HEK293T (cell line): ENCODE measurements at regions of chr18 and their contacts with region 1.

Region 1: DNA sequence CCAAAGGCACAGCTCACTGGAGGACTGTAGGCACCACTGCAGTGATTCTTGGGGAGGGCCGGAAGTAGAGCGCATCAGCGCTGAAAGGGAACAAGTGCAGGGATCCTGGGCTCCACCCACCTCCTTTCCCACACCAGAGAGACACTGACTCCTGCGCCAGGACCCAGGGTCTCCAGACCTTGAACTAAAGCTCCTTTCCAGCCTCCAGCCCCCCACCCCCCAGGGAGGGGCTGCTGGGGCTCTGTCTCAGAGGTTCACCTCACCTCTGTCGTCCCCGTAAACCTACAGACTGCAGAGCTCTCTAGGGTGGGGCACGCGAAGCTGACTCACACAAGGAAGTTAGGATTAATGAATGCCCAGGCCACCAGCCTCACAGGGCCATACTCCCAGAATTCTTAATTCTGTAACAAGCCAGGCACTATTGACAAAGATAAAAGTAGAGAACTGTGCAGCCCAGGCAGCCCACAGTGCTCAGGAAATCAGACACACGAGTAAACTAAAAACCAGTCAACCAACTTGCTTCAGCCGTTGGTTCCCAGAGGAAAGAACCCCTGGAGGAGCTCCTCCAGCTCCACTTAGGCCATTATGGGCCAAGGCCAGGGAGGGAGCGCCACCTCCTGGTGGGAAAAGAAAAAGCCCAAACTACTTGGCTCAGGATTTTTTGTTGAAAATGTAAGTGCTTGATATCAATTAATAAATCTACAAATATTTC is 45.1 kb upstream of the ACAA2 start:
- DNase-seq: peak; percentile 68

Region 2: DNA sequence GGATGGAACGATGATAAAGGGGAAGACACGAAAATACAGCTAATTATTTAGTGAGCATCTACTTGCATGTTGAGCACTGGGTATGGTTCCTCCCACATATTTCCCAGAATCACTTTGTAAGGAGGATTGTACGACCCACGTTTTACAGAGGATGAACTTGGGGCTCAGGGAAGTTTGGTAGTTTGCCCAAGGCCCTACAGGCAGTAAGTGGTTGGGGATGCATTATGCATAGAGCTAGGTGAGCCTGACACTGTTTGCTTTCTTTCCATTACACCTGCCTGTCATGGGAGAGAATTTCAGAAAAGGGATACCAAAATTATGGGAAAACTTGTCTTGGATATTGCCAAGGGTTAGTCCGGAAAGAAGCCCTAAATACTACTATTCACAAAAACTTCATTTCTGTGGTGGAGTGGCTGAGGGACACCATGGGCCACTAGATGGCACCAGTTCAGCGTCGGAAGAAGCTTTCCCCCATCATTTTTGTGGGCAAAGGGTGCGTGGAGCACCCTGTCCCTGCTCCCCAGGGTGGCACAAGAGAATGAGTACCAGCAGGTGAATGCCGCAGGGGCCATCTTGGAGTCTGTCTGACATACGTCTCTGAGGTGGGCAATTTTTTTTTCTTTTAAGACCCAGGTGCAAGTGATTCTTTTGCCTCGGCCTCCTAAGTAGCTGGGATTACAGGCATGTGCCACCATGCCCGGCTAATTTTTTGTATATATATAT is 347.9 kb before region 1 on chr18:
- CTCF ChIA-PET with region 1: interaction called, 10 read pairs
- POLR2A ChIA-PET with region 1: no interaction called
- DNase-seq: peak; percentile 50

Region 3: GRCh38 chr18:49827996-49828395 is 30.5 kb before region 1 on chr18:
- CTCF ChIA-PET with region 1: no interaction called
- POLR2A ChIA-PET with region 1: no interaction called
- DNase-seq: no peak